ENCODE measurements at regions of chr18 and their contacts with region 1.

Region 1: DNA sequence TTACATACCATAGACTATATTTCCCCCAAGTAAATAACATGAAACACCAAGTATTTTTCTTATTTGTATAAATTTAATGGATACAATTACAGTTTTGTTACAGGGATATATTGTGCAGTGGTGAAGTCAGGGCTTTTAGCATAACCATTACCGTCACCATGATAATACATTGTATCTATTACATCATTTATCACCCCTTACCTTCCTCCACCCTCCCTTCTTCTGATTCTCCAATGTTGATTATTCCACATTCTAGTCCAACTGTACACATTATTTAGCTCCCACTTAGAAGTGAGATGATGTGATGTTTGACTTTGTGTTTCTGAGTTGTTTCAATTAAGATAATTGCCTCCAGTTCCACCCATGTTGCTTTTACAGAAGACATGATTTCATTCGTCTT is 35.2 kb upstream of the NETO1 start:
- DNase-seq: no peak
- H3K4me3 ChIP-seq: no peak overlapping the region
- H3K27ac ChIP-seq: no peak overlapping the region
- H3K4me1 ChIP-seq: no peaks in the 10 kb centered on the region
- H3K27me3 ChIP-seq: no peaks in the 10 kb centered on the region
- CTCF ChIP-seq: no peak

Region 2: DNA sequence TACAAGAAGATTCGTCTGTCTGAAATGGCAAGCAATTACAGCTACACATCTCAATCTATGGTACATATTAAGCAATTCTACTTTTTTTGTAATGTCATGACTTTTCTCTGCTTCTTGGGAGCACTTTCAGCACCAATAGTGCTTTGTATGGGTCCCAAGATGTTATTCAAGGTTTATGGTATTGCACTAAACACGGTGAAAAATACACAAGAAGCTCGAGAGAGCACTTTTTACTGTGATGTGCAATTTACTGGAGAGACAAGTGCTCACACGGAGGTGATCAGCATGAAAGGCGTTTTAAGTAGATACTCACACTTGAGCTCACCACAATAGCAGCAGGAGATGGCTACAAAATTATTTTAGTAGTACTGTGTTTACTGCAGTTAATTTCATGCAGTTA is 1142.5 kb before region 1 on chr18:
- CTCF ChIA-PET with region 1: no interaction called
- POLR2A ChIA-PET with region 1: no interaction called
- intact Hi-C with region 1: no loop called
- DNase-seq: no peak
- H3K4me3 ChIP-seq: no peak overlapping the region
- H3K27ac ChIP-seq: no peak overlapping the region
- H3K4me1 ChIP-seq: no peaks in the 10 kb centered on the region
- H3K27me3 ChIP-seq: no peaks in the 10 kb centered on the region
- CTCF ChIP-seq: no peak

Region 3: GRCh38 chr18:71887509-71887908 is 1015.5 kb before region 1 on chr18:
- CTCF ChIA-PET with region 1: no interaction called
- POLR2A ChIA-PET with region 1: no interaction called
- intact Hi-C with region 1: no loop called
- DNase-seq: no peak
- H3K4me3 ChIP-seq: no peak overlapping the region
- H3K27ac ChIP-seq: no peak overlapping the region
- H3K4me1 ChIP-seq: no peaks in the 10 kb centered on the region
- H3K27me3 ChIP-seq: no peaks in the 10 kb centered on the region
- CTCF ChIP-seq: no peak

Region 4: GRCh38 chr18:72720116-72720515 is 182.9 kb before region 1 on chr18:
- CTCF ChIA-PET with region 1: no interaction called
- POLR2A ChIA-PET with region 1: no interaction called
- intact Hi-C with region 1: no loop called
- DNase-seq: no peak
- H3K4me3 ChIP-seq: no peak overlapping the region
- H3K27ac ChIP-seq: no peak overlapping the region
- H3K4me1 ChIP-seq: no peaks in the 10 kb centered on the region
- H3K27me3 ChIP-seq: no peaks in the 10 kb centered on the region
- CTCF ChIP-seq: no peak

Region 5: DNA sequence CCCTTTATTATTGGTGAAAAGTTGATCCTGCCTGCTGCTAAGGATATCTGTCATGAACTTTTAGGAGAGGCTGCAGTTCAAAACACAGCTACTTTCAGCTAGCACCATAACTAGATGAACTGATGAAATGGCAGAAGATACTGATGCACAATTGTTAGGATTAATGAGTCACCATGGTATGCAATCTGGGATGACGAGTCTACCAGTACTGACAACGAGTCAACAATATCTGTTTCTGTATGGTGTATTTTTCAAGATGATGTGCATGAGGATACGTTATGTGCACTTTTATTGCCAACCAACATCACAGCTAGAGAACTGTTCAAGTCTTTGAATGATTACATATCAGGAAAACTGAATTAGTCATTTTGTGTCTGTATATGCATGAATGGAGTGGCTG is 103.9 kb before region 1 on chr18:
- CTCF ChIA-PET with region 1: no interaction called
- POLR2A ChIA-PET with region 1: no interaction called
- intact Hi-C with region 1: no loop called
- DNase-seq: no peak
- H3K4me3 ChIP-seq: no peak overlapping the region
- H3K27ac ChIP-seq: no peak overlapping the region
- H3K4me1 ChIP-seq: no peaks in the 10 kb centered on the region
- H3K27me3 ChIP-seq: no peaks in the 10 kb centered on the region
- CTCF ChIP-seq: no peak

Region 6: GRCh38 chr18:73264562-73264921 is 361.5 kb after region 1 on chr18:
- CTCF ChIA-PET with region 1: no interaction called
- POLR2A ChIA-PET with region 1: interaction called, 24 read pairs
- intact Hi-C with region 1: no loop called
- DNase-seq: no peak
- H3K4me3 ChIP-seq: peak overlapping the region; percentile 58; the same call in 1 of the 2 replicates
- H3K27ac ChIP-seq: peak overlapping the region; percentile 81
- H3K4me1 ChIP-seq: peaks cover 27% of the 10 kb centered on the region
- H3K27me3 ChIP-seq: no peaks in the 10 kb centered on the region
- CTCF ChIP-seq: no peak